ENCODE measurements at regions of chr1 and their contacts with region 1.

Region 1: DNA sequence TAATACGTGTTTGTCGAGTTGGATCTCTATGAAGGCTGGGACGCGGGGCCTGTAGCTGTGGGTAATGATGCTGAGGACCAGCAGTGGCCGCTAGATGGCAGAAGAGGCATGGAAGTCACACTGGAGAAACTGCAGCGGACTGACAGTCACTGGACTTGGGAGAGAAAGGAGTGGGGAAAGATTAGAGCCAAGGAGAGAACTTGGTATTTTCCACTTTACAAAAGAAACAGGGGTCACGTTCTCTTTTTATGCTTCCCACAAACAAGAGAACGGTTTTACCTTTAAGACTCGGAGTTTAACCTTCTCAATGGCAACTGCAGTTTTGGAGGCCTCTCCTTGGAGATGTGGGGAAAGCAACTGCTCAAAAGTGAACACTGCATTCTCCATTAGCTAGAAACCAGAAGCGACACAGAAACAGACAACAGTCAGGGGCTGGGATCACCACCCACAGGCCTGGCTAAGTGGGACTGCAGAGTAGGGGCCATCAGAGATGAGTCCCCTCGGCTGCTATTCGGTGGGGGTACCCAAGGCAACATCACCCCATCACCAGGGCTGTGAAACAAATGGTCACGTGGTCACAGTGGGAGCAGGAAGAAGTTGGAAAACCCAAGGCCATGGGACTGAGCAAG is 51.1 kb upstream of the EDEM3 start:
- DNase-seq: peak; percentile 71 to 90 (median 85)
- ATAC-seq: peak; percentile 92
- H3K4me3 ChIP-seq: no peak overlapping the region
- H3K4me3 Mint-ChIP-seq: no peak overlapping the region
- H3K27ac ChIP-seq: no peak overlapping the region
- H3K27ac Mint-ChIP-seq: no peak overlapping the region
- H3K4me1 ChIP-seq: no peaks in the 10 kb centered on the region
- H3K4me1 Mint-ChIP-seq: peaks cover 6% of the 10 kb centered on the region
- H3K27me3 ChIP-seq: no peaks in the 10 kb centered on the region
- H3K27me3 Mint-ChIP-seq: no peaks in the 10 kb centered on the region
- CTCF ChIP-seq: peak; percentile 92

Region 2: DNA sequence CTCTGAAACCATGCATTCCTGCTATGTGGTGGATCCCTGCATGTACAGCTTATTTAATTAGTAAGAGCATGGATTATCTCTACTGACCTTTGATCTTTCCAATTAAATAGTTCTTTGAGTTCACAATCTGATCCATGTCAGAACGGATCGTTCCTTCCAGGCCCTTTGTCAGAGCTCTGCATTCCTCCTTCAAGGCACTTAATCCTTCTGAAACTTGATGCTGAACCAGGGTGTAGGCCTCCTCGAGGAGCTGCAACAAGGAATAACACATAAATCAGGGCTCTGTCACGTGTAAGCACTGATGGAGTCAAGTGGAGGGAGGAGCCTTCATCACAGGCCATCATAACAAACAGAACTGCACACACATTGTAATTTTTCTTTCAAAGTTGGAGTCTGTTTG is 17.3 kb after region 1 on chr1:
- CTCF ChIA-PET with region 1: interaction called, 34 read pairs
- POLR2A ChIA-PET with region 1: no interaction called
- intact Hi-C with region 1: no loop called
- DNase-seq: no peak
- ATAC-seq: no peak
- H3K4me3 ChIP-seq: no peak overlapping the region
- H3K4me3 Mint-ChIP-seq: no peak overlapping the region
- H3K27ac ChIP-seq: no peak overlapping the region
- H3K27ac Mint-ChIP-seq: no peak overlapping the region
- H3K4me1 ChIP-seq: no peaks in the 10 kb centered on the region
- H3K4me1 Mint-ChIP-seq: peaks cover 3% of the 10 kb centered on the region
- H3K27me3 ChIP-seq: no peaks in the 10 kb centered on the region
- H3K27me3 Mint-ChIP-seq: no peaks in the 10 kb centered on the region
- CTCF ChIP-seq: no peak

Region 3: DNA sequence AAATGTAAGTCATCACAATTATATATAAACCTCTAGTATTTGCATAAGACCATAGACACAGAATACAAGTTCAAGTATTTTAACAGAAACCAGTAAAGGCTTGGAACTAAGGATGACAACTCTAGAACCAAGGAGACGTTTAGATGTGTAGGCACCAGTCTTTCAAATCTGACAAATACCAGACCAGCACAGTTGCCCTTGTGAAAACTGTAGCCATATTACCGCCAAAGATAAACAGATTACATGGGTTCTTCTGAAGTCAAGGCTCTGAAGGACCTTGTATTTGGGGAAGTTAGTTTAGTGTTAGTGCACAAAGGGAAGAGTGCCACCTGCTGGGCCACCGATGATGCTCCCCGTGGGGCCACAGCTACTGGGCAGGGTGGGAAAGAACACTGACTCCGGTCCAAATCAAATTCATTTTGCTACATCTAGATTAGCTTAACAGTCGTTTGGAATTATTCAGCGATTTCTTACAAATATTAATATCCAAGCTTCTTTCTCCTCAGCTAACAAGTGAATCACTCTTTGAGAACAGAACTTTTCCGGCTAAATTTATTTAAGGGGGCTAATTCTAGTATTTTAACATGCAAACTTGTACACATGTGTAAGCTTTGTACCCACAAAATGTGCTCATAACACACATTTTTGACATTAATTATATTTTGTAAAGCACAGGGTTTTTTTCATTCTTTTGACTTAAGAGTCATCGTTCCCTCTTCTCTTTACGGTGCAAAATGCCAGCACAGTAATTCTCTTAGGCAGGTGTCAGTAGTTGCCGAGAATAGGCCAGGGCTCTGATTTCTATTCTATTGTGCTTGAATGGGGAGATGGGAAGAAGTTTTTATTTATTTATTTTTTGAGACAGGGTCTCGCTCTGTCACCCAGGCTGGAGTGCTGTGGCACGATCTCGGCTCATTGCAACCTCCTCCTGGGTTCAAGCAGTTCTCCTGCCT is 176.5 kb after region 1 on chr1:
- CTCF ChIA-PET with region 1: interaction called, 200 read pairs
- POLR2A ChIA-PET with region 1: no interaction called
- intact Hi-C with region 1: loop called (anchors 1 kb)
- DNase-seq: peak; percentile 57 to 86 (median 78)
- ATAC-seq: peak; percentile 97
- H3K4me3 ChIP-seq: no peak overlapping the region
- H3K4me3 Mint-ChIP-seq: no peak overlapping the region
- H3K27ac ChIP-seq: no peak overlapping the region
- H3K27ac Mint-ChIP-seq: no peak overlapping the region
- H3K4me1 ChIP-seq: no peaks in the 10 kb centered on the region
- H3K4me1 Mint-ChIP-seq: peaks cover 5% of the 10 kb centered on the region
- H3K27me3 ChIP-seq: no peaks in the 10 kb centered on the region
- H3K27me3 Mint-ChIP-seq: peaks cover 20% of the 10 kb centered on the region
- CTCF ChIP-seq: peak; percentile 87

Region 4: GRCh38 chr1:185075476-185075875 is 269.7 kb after region 1 on chr1:
- CTCF ChIA-PET with region 1: no interaction called
- POLR2A ChIA-PET with region 1: no interaction called
- intact Hi-C with region 1: no loop called
- DNase-seq: no peak
- ATAC-seq: no peak
- H3K4me3 ChIP-seq: no peak overlapping the region
- H3K4me3 Mint-ChIP-seq: no peak overlapping the region
- H3K27ac ChIP-seq: no peak overlapping the region
- H3K27ac Mint-ChIP-seq: no peak overlapping the region
- H3K4me1 ChIP-seq: no peaks in the 10 kb centered on the region
- H3K4me1 Mint-ChIP-seq: peaks cover 62% of the 10 kb centered on the region
- H3K27me3 ChIP-seq: no peaks in the 10 kb centered on the region
- H3K27me3 Mint-ChIP-seq: no peaks in the 10 kb centered on the region
- CTCF ChIP-seq: no peak

Region 5: GRCh38 chr1:185170291-185170848 is 364.6 kb after region 1 on chr1:
- CTCF ChIA-PET with region 1: interaction called, 39 read pairs
- POLR2A ChIA-PET with region 1: no interaction called
- intact Hi-C with region 1: loop called (anchors 1 kb)
- DNase-seq: peak in 7 of 9 experiments; percentile 23 to 76 (median 53)
- ATAC-seq: peak; percentile 93
- H3K4me3 ChIP-seq: no peak overlapping the region
- H3K4me3 Mint-ChIP-seq: peak overlapping the region; percentile 42
- H3K27ac ChIP-seq: no peak overlapping the region
- H3K27ac Mint-ChIP-seq: peak overlapping the region; percentile 10
- H3K4me1 ChIP-seq: no peaks in the 10 kb centered on the region
- H3K4me1 Mint-ChIP-seq: peaks cover 3% of the 10 kb centered on the region
- H3K27me3 ChIP-seq: no peaks in the 10 kb centered on the region
- H3K27me3 Mint-ChIP-seq: no peaks in the 10 kb centered on the region
- CTCF ChIP-seq: peak; percentile 80

Region 6: DNA sequence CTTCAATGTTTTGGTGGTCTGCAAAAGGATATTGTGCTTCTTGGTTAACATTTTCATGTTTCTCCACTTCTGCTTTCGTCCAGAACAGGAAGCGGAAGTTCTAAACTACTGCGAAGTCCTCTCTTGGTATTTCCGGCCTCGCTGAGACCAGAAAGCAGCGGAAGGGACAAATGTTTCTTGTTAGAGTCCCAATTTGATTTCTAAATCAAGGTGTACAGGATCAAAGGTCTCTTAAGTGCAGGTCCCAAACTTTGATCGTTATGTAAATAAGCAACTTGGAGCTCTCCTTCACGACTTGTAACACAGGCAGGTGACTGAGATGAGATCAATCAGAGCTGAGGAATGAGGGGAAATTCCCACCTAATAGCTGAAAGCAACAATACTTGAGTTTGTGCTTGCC is 888.3 kb after region 1 on chr1:
- CTCF ChIA-PET with region 1: interaction called, 9 read pairs
- POLR2A ChIA-PET with region 1: no interaction called
- intact Hi-C with region 1: loop called (anchors 1 to 5 kb)
- DNase-seq: peak in 5 of 9 experiments; percentile 9 to 68 (median 40)
- ATAC-seq: peak; percentile 48
- H3K4me3 ChIP-seq: peak overlapping the region; percentile 31 to 36
- H3K4me3 Mint-ChIP-seq: peak overlapping the region; percentile 76
- H3K27ac ChIP-seq: peak overlapping the region; percentile 38 to 77
- H3K27ac Mint-ChIP-seq: peak overlapping the region; percentile 91
- H3K4me1 ChIP-seq: peaks cover 18% of the 10 kb centered on the region
- H3K4me1 Mint-ChIP-seq: peaks cover 23% of the 10 kb centered on the region
- H3K27me3 ChIP-seq: no peaks in the 10 kb centered on the region
- H3K27me3 Mint-ChIP-seq: peaks cover 3% of the 10 kb centered on the region
- CTCF ChIP-seq: no peak